Right cardiac atrium (tissue), 5 donors: ENCODE measurements at regions of chr7 and their contacts with region 1.

Region 1: DNA sequence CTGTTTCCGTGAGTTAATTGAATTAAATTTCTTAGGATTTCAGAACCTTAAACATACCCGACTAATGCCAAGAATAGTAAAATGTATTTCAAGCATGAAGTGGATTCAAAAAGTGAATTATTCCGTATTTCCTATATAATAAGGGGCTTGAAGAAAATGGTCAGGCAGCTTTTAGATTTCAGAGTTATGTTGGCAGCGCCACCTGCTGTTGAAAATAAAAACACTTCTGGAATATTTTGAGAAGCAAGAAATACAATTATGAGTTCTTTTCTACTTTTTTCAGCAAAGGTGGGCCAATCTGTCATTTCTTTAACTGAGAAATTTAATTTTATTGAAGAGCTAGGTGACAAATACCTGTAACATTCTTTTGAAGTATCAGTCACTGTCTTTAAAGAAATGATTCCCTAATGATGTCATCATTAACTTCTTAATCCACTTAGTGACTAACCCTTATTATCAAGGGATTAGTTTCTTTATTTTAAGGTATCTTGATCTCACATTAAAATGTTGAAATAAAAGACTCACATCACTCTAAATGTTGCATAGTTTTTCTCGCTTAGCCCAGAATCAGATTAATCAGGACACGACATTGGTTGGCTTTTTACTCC is 36.6 kb upstream of the AGR3 start:
- DNase-seq: no peak
- ATAC-seq: no peak
- H3K4me3 ChIP-seq: no peak overlapping the region
- H3K27ac ChIP-seq: no peak overlapping the region
- H3K4me1 ChIP-seq: no peaks in the 10 kb centered on the region
- H3K27me3 ChIP-seq: no peaks in the 10 kb centered on the region

Region 2: DNA sequence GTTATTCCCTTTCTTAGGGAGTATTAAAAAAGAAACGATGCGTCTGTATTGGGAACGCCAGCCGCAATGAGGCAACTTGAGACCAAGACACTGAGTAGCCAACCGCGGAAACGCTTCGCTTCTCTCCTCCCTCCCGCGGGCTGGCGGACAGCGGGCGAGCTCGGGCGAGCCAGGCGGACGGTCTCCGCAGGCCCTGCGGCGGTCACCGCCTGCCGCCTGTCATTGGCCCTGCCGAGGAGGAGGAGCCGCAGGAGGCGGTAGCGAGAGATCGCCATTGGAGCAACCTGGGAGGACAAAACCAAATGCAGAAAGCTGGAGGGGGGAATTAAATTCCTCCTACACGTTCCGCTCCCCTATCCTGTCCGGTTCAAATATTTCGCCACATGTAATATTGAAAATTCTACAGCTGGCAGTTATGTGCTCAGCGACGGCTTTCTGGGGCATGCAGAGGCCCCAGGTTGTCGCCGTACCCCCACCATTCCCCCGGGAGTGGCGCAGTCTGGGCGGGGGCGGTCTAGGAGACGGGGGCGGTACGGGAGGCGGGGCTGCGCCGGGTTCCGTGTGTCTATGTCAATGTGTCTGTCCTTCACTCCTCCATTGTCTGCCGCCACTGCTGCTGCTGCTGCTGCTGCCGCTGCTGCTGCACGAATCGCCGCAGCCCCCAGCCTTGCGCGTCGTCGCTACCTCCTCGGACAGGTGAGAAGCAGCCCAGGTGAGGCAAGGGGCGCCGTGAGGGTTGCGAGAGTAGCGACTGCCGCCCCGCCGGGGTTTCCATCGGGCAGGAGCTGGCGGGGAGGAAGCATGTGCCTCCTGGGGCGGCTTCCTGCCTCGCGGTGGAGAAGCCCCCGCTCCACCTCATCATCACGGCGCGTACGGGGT is 272.6 kb before region 1 on chr7 and contains the starts of genes ANKMY2 and BZW2:
- intact Hi-C with region 1: no loop called
- DNase-seq: peak; percentile 97 to 99 (median 98)
- ATAC-seq: peak; percentile 98
- H3K4me3 ChIP-seq: peak within 1 kb of the TSS; percentile 91
- H3K27ac ChIP-seq: peak within 1 kb of the TSS; percentile 86
- H3K4me1 ChIP-seq: peaks cover 2% of the 10 kb centered on the region
- H3K27me3 ChIP-seq: no peaks in the 10 kb centered on the region
- total RNA-seq, gene ANKMY2: 28.4 to 41.3 (median 34.4) TPM
- total RNA-seq, gene BZW2: 124 to 214 (median 175) TPM

Region 3: DNA sequence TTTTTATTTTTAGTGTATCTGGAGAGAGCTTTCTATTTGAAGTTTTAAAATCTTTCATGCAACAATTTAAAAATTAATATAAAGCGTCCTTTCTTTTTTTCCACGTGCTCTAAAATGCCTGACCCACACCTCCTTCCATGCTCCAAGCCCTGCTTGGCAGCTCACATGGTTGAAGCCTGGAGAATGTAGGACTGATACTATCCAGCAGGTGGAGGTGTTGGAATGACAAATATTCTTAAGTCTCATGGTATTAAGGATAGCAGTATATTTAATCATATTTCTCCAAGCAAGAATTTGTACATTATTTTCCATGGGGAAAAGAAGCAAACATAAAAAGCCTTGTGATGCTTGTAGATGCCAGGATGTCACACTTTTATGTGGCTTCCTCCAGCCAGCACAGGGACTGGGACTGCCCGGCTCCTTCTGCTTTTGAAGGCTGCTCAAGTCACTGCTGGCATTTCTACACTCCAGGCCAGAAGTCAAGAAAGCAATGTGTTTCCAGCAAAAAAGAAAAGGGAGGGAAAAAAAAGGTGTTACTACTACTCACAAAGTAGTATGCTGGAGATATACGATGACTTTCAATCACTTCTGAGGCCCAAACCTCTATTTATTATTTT is 222.7 kb before region 1 on chr7:
- intact Hi-C with region 1: loop called (anchors 5 to 10 kb)
- DNase-seq: no peak
- ATAC-seq: peak; percentile 64 to 79
- H3K4me3 ChIP-seq: no peak overlapping the region
- H3K27ac ChIP-seq: no peak overlapping the region
- H3K4me1 ChIP-seq: no peaks in the 10 kb centered on the region
- H3K27me3 ChIP-seq: no peaks in the 10 kb centered on the region

Region 4: DNA sequence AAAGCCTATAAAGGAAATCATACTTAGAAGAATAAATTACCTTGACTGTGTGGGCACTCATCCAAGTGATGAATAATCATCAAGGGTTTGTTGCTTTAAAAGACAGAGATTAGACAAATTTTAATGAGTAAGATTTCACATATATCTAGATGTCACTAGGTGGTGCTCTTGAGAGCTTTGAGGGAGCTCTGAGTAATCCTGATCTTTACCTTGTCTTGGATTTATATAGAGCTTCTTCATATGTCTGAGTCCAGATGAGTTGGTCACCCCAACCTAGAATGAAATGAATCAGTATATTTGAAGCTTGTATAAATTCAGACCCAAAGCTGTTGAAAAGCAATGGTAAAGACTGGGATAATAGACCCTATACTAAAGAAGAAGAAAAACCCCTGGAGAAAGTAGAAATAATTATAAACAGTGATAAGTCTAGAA is 117.3 kb before region 1 on chr7:
- intact Hi-C with region 1: loop called (anchors 5 to 10 kb)
- DNase-seq: no peak
- ATAC-seq: peak; percentile 25 to 45
- H3K4me3 ChIP-seq: no peak overlapping the region
- H3K27ac ChIP-seq: no peak overlapping the region
- H3K4me1 ChIP-seq: no peaks in the 10 kb centered on the region
- H3K27me3 ChIP-seq: no peaks in the 10 kb centered on the region

Region 5: GRCh38 chr7:16847366-16847864 is 71.0 kb before region 1 on chr7:
- intact Hi-C with region 1: no loop called
- DNase-seq: no peak
- ATAC-seq: peak in 1 of 2 donors; percentile 26
- H3K4me3 ChIP-seq: no peak overlapping the region
- H3K27ac ChIP-seq: no peak overlapping the region
- H3K4me1 ChIP-seq: no peaks in the 10 kb centered on the region
- H3K27me3 ChIP-seq: no peaks in the 10 kb centered on the region